ENCODE measurements at regions of chr1 and their contacts with region 1.

Region 1: GRCh38 chr1:229661022-229661877 is 35.2 kb downstream of the URB2 start:
- DNase-seq: no peak
- H3K4me3 ChIP-seq: no peak overlapping the region
- H3K27me3 ChIP-seq: no peaks in the 10 kb centered on the region
- CTCF ChIP-seq: peak; percentile 96

Region 2: DNA sequence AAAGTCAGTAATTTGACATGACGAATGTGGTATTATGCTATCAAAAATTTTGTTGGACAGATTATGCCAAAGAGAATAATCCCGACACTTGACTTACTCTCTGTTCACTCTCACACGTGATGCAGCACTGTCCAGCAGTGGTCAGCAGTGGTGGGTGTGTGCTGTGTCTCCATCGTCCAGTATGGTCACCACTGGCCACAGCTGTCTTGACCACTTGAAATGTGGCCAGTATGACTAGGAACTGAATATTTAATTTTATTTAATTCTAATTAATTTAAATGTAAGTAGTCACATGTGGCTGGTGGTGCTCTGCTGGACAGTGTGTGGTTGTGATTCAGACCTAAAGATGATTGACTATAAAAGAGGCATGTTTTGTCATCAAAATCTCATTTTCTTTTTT is 11.2 kb before region 1 on chr1:
- CTCF ChIA-PET with region 1: interaction called, 17 read pairs
- POLR2A ChIA-PET with region 1: no interaction called
- DNase-seq: no peak
- H3K4me3 ChIP-seq: no peak overlapping the region
- H3K27me3 ChIP-seq: no peaks in the 10 kb centered on the region
- CTCF ChIP-seq: no peak

Region 3: GRCh38 chr1:229674042-229674441 is 12.8 kb after region 1 on chr1:
- CTCF ChIA-PET with region 1: interaction called, 26 read pairs
- POLR2A ChIA-PET with region 1: no interaction called
- DNase-seq: no peak
- H3K4me3 ChIP-seq: no peak overlapping the region
- H3K27me3 ChIP-seq: no peaks in the 10 kb centered on the region
- CTCF ChIP-seq: no peak

Region 4: GRCh38 chr1:229753764-229754551 is 92.7 kb after region 1 on chr1:
- CTCF ChIA-PET with region 1: no interaction called
- POLR2A ChIA-PET with region 1: no interaction called
- DNase-seq: no peak
- H3K4me3 ChIP-seq: no peak overlapping the region
- H3K27me3 ChIP-seq: no peaks in the 10 kb centered on the region
- CTCF ChIP-seq: no peak

Region 5: GRCh38 chr1:230270559-230271281 is 609.5 kb after region 1 on chr1:
- CTCF ChIA-PET with region 1: interaction called, 10 read pairs
- POLR2A ChIA-PET with region 1: no interaction called
- DNase-seq: no peak
- H3K4me3 ChIP-seq: no peak overlapping the region
- H3K27me3 ChIP-seq: no peaks in the 10 kb centered on the region
- CTCF ChIP-seq: no peak

Region 6: GRCh38 chr1:230310381-230311163 is 649.3 kb after region 1 on chr1:
- CTCF ChIA-PET with region 1: interaction called, 14 read pairs
- POLR2A ChIA-PET with region 1: no interaction called
- DNase-seq: no peak
- H3K4me3 ChIP-seq: no peak overlapping the region
- H3K27me3 ChIP-seq: peaks cover 2% of the 10 kb centered on the region; the same call in 1 of the 2 replicates
- CTCF ChIP-seq: peak; percentile 92

Measured in BJ (cell line).